HEK293T (cell line): ENCODE measurements at regions of chr16 and their contacts with region 1.

Region 1: DNA sequence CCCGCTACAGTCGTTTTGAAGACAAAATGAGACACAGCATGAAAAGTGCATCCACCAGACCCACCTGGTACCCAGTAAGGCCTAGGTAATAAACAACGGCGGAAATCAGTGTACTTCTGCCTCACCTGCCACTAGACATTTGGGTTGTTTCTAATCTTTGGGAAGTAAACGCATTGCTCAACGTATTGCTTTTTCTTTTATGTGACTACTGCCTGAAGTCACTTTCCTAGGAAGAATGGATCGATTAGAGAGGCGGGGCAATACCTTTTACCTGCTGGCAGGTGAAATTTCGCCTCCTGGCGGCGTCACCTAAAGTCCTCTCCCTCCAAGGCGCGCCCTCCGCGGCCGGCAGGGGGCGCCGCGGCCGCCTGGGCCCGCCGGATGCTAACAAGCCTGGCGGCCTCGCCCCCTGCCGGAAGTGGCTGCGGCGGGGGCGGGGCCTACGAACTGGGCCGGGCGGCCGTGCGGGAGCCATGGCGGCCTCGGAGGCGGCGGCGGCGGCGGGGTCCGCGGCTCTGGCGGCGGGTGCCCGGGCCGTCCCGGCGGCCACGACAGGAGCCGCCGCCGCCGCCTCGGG is at the start of gene ATMIN:
- DNase-seq: peak; percentile 96

Region 2: GRCh38 chr16:81077076-81077940 is 41.8 kb after region 1 on chr16 and contains the start of gene C16orf46:
- CTCF ChIA-PET with region 1: interaction called, 3 read pairs
- POLR2A ChIA-PET with region 1: interaction called, 14 read pairs
- DNase-seq: peak; percentile 96

Region 3: GRCh38 chr16:81117436-81117835 is 82.0 kb after region 1 on chr16:
- CTCF ChIA-PET with region 1: no interaction called
- POLR2A ChIA-PET with region 1: no interaction called
- DNase-seq: no peak

Region 4: DNA sequence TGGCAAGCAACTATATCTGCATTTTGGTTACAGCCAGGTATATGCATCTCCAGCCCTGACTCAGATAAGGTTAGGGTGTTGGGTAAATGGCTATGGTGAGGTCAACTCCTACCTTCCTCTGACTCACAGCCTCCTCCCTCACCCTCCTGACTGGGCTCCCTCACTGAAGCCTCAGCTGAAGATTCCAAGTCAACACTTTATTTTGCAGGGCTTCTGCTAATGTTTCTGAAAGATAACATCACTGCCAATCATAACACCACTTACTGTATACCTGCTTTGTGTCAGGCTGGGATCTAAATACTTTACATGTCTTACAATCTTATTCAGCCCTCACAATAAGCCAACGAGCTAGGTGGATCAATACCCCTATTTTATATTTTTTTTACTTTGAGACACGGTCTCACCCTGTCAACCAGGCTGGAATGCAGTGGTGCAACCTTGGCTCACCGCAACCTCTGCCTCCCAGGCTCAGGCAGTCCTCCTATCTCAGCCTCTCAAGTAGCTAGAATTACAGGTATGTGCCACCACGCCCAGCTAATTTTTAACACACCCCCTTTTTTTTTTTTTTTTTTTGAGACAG is 108.5 kb after region 1 on chr16:
- CTCF ChIA-PET with region 1: no interaction called
- POLR2A ChIA-PET with region 1: no interaction called
- DNase-seq: no peak